Activated CD4-positive, alpha-beta T cell treated with anti-CD3 and anti-CD28 coated beads, Interleukin-2, amount 10 ng/mL, durations not matched to agents 24 days and 14 days (primary cell): ENCODE measurements at regions of chr1 and their contacts with region 1.

Region 1: GRCh38 chr1:222617367-222617951 is 438 bp upstream of the MIA3 start:
- DNase-seq: peak; percentile 96
- H3K4me3 Mint-ChIP-seq: peak overlapping the region; percentile 87
- H3K27ac Mint-ChIP-seq: peak overlapping the region; percentile 87
- H3K4me1 Mint-ChIP-seq: peaks cover 32% of the 10 kb centered on the region
- H3K27me3 Mint-ChIP-seq: peaks cover 33% of the 10 kb centered on the region

Region 2: DNA sequence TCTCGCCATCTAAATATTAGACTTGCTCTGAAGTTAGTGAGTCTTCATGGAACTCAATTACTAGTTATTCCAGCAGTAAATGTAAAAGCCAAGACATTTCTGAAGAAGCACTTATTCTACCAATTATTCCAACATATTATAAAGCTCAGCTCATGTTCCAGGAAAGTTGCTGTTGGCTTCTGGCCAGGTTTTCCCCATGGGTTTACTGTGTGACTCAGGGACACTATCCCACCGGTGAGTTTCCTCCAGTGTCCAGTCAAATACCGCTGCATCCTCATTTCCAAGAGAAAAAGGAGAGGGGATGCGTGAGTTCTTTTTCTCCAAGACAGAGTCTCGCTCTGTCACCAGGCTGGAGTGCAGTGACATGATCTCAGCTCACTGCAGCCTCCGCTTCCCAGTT is 60.3 kb before region 1 on chr1:
- intact Hi-C with region 1: no loop called
- DNase-seq: no peak
- H3K4me3 Mint-ChIP-seq: no peak overlapping the region
- H3K27ac Mint-ChIP-seq: no peak overlapping the region
- H3K4me1 Mint-ChIP-seq: no peaks in the 10 kb centered on the region
- H3K27me3 Mint-ChIP-seq: no peaks in the 10 kb centered on the region

Region 3: DNA sequence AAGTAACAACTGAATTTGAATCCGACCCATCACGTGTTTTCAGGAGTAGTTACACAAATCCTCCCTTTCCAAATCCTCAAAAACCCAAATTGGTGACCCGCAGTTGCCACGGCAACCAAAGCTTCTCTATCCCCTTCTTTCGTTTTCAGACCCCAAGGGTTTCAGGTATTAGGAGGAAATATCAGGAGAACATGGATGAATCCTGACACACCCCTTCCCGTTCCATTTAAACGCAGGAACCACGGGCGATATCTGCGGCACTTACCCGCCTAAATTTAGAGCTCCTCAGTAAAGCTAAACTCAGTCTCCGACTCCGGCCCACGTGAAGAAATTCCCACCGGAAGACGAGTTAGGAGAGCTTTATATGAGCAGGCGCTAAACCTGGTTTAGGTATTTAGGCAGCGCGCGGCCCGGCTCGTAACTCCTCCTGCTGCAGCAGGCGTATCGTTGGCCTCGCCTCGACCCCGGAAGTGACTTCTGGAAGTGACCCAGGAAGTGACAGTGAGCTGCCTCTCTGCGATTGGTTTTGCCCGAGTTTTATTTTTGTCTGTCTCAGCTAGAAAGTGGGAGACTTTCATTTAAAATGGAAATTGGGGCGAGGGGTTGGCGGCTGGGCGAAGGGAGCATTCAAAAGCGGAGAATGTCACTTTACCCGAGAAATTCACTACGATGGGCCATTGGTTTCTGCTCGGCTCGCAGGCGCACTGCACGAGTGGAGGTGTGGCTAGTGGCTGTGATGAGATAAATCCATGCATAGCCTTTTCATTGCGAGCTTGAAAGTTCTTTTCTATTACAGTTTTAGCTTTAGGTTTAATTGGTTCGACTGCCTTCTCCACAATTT is 27.8 kb before region 1 on chr1 and contains the start of gene TAF1A:
- intact Hi-C with region 1: loop called (anchors 1 kb)
- DNase-seq: peak; percentile 95
- H3K4me3 Mint-ChIP-seq: peak within 1 kb of the TSS; percentile 96
- H3K27ac Mint-ChIP-seq: peak within 1 kb of the TSS; percentile 95
- H3K4me1 Mint-ChIP-seq: peaks cover 33% of the 10 kb centered on the region
- H3K27me3 Mint-ChIP-seq: peaks cover 4% of the 10 kb centered on the region
- total RNA-seq, gene TAF1A: 23.1 and 24.4 TPM in 2 replicates

Region 4: DNA sequence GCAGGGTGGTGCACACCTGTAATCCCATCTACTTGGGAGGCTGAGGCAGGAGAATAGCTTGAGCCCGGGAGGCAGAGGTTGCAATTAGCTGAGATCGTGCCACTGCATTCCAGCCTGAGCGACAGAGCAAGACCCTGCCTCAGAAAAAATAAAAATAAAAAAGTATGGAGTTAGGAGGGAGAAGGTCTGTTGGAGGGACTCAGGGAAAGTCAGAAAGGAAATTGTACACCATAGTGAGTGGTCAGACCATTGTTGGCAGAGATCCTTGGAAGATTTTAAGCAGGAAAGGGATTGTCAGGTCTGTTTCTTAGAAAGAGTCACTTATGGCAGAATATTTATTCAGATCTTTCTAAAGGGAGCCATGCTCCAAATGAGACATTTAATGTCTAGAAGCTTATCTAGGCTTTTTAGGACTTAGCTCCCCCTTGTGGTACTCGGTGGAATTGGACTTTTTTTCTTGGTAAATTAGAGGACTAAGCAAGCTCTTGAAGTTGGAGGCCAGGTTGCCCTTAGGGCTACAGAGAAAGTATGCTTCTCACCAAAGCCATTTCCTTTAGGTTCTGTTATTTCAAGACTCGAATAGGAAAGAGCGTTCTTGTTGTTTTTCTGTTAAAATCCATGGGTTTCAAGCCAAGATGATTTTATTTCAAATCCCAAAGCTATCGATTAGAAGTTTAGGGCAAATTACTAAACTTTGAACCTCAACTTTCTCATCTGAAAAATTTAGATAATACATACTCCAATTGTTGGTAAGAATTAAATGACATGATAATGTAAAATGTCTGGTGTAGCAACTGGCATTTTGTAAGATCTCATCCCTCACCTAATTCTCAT is 16.9 kb after region 1 on chr1:
- intact Hi-C with region 1: loop called (anchors 2 kb)
- DNase-seq: peak; percentile 93
- H3K4me3 Mint-ChIP-seq: no peak overlapping the region
- H3K27ac Mint-ChIP-seq: no peak overlapping the region
- H3K4me1 Mint-ChIP-seq: peaks cover 6% of the 10 kb centered on the region
- H3K27me3 Mint-ChIP-seq: no peaks in the 10 kb centered on the region

Region 5: DNA sequence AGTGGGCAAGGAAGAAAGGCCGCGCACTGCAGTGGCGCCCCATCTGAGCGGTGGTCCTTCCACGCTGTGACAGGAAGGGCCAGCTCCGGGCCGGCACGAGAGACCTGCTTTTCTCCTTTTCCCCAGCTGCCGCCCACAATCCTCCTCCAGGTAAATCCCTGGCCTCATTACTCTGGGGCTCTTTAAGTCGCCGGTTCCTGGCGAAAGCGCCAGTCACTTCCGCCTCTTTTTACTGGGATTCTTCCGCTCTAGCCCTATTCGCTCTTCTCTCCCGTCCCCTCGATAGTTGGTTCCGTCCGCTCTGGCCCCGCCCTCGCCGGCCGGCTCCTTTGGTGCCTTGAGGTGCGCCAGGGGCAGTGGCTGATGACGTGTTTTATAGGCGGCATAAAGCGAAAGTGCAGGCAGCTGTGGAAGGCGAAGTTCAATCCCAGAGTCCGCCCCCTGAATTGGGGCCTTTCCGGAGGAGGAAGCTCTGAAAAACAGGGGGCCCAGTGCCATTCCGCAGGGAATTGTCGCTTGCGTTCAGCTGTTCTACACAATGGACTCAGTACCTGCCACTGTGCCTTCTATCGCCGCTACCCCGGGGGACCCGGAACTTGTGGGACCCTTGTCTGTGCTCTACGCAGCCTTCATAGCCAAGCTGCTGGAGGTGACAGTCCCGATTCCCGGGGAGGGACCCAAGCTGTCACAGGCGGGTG is 26.6 kb after region 1 on chr1:
- intact Hi-C with region 1: loop called (anchors 1 kb)
- DNase-seq: peak; percentile 100
- H3K4me3 Mint-ChIP-seq: peak overlapping the region; percentile 95
- H3K27ac Mint-ChIP-seq: peak overlapping the region; percentile 94
- H3K4me1 Mint-ChIP-seq: peaks cover 28% of the 10 kb centered on the region
- H3K27me3 Mint-ChIP-seq: no peaks in the 10 kb centered on the region